PC-9 (cell line): ENCODE measurements at regions of chr3 and their contacts with region 1.

Region 1: GRCh38 chr3:33360136-33360825 is 79.9 kb downstream of the UBP1 start:
- DNase-seq: peak; percentile 52 to 87
- H3K4me3 ChIP-seq: peak overlapping the region; percentile 38; the same call in 1 of the 2 replicates
- H3K27ac ChIP-seq: peak overlapping the region; percentile 94
- H3K4me1 ChIP-seq: peaks cover 26% of the 10 kb centered on the region
- H3K27me3 ChIP-seq: no peaks in the 10 kb centered on the region
- CTCF ChIP-seq: no peak

Region 2: DNA sequence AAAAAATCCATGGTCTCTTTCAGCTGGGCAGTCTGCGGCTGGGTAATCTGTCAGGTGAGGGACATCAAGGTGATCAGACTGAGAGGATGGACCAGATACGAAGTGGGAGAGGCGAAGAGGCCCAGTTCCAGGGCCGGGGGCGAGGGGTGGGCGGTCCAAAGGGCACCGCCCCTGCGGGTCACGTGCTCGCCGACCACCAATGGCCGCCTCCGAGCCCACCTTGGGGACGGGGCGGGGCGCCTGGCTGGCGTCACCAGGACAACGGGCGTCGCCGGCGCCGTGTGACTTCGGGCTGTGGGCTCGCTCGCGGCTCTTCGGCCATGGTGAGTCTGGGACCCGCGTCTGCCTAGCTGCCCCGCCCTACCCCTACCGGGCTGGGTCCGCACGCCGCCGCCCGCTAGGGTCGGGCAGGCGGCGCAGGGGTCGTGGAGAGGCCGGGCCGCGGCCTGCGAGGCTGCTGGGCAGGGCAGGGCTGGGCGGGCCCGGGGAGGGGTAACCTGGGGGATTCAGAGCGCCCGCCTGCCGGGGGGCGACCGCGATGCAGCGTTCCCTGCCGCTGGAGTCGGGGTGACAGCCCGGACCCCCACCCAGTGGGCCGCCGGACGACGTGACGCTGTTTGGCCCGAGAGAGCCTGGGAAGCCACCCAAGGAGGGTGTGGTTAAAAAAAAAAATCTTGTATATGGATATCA is 82.9 kb before region 1 on chr3 and contains the start of gene FBXL2:
- CTCF ChIA-PET with region 1: no interaction called
- POLR2A ChIA-PET with region 1: interaction called, 3 read pairs
- intact Hi-C with region 1: loop called (anchors 1 kb)
- DNase-seq: peak; percentile 54 to 88
- H3K4me3 ChIP-seq: peak within 1 kb of the TSS; percentile 72
- H3K27ac ChIP-seq: no peak within 1 kb of the TSS
- H3K4me1 ChIP-seq: peaks cover 5% of the 10 kb centered on the region; the same call in 1 of the 2 replicates
- H3K27me3 ChIP-seq: no peaks in the 10 kb centered on the region
- CTCF ChIP-seq: no peak
- total RNA-seq, gene FBXL2: 15.8 and 18.5 TPM in 2 replicates

Region 3: DNA sequence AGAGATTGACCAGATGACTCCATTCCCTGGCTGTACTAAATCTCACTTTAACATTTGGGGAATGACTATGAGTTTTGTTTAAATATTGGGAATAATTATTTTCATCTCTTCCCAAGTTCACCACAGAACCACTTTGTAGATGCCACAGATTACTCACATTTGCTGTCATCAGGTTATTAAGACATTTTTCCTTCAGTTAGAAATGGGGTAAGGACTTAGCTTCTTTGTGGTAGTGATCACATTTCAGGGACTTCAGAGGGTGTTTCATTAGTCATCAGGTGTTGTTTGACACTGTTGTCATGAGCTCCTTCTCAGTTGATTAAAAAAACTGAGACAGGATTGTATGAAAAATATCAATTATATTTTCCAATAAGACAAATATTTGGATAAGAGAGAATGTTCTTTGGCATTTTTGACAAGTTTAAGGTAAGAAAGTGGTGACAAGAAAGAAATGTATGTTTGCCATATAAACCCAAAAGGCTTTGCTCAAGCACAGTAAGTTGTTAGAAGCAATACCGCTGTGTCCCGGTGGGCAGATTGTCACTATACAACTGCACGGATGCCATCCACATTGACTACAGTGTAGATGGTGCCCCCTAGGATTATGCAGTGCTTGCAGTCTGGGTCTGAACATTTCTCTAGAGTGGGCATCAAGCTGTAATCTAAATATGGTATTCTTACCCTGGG is 60.7 kb before region 1 on chr3:
- CTCF ChIA-PET with region 1: interaction called, 4 read pairs
- POLR2A ChIA-PET with region 1: interaction called, 8 read pairs
- intact Hi-C with region 1: loop called (anchors 1 kb)
- DNase-seq: peak; percentile 55 to 77
- H3K4me3 ChIP-seq: no peak overlapping the region
- H3K27ac ChIP-seq: peak overlapping the region; percentile 84
- H3K4me1 ChIP-seq: peaks cover 15% of the 10 kb centered on the region
- H3K27me3 ChIP-seq: no peaks in the 10 kb centered on the region
- CTCF ChIP-seq: no peak

Region 4: GRCh38 chr3:33318709-33319380 is 41.4 kb before region 1 on chr3:
- CTCF ChIA-PET with region 1: no interaction called
- POLR2A ChIA-PET with region 1: no interaction called
- intact Hi-C with region 1: loop called (anchors 1 kb)
- DNase-seq: no peak
- H3K4me3 ChIP-seq: no peak overlapping the region
- H3K27ac ChIP-seq: no peak overlapping the region
- H3K4me1 ChIP-seq: peaks cover 34% of the 10 kb centered on the region
- H3K27me3 ChIP-seq: no peaks in the 10 kb centered on the region
- CTCF ChIP-seq: no peak

Region 5: GRCh38 chr3:33331414-33331813 is 28.9 kb before region 1 on chr3:
- CTCF ChIA-PET with region 1: no interaction called
- POLR2A ChIA-PET with region 1: interaction called, 17 read pairs
- intact Hi-C with region 1: no loop called
- DNase-seq: no peak
- H3K4me3 ChIP-seq: no peak overlapping the region
- H3K27ac ChIP-seq: no peak overlapping the region
- H3K4me1 ChIP-seq: no peaks in the 10 kb centered on the region
- H3K27me3 ChIP-seq: no peaks in the 10 kb centered on the region
- CTCF ChIP-seq: no peak